Activated CD8-positive, alpha-beta T cell treated with anti-CD3 and anti-CD28 coated beads for 36 hours (primary cell): ENCODE measurements at regions of chr4 and their contacts with region 1.

Region 1: GRCh38 chr4:38759113-38759789 is 23.5 kb downstream of the TLR10 start:
- DNase-seq: peak; percentile 76
- ATAC-seq: peak; percentile 80
- H3K4me3 Mint-ChIP-seq: no peak overlapping the region
- H3K27ac Mint-ChIP-seq: no peak overlapping the region
- H3K4me1 Mint-ChIP-seq: peaks cover 16% of the 10 kb centered on the region
- H3K27me3 Mint-ChIP-seq: no peaks in the 10 kb centered on the region
- CTCF ChIP-seq: peak; percentile 84

Region 2: GRCh38 chr4:38774181-38774955 is 15.1 kb after region 1 on chr4:
- CTCF ChIA-PET with region 1: interaction called, 151 read pairs
- POLR2A ChIA-PET with region 1: no interaction called
- intact Hi-C with region 1: no loop called
- DNase-seq: no peak
- ATAC-seq: no peak
- H3K4me3 Mint-ChIP-seq: no peak overlapping the region
- H3K27ac Mint-ChIP-seq: no peak overlapping the region
- H3K4me1 Mint-ChIP-seq: no peaks in the 10 kb centered on the region
- H3K27me3 Mint-ChIP-seq: peaks cover 3% of the 10 kb centered on the region
- CTCF ChIP-seq: no peak

Region 3: DNA sequence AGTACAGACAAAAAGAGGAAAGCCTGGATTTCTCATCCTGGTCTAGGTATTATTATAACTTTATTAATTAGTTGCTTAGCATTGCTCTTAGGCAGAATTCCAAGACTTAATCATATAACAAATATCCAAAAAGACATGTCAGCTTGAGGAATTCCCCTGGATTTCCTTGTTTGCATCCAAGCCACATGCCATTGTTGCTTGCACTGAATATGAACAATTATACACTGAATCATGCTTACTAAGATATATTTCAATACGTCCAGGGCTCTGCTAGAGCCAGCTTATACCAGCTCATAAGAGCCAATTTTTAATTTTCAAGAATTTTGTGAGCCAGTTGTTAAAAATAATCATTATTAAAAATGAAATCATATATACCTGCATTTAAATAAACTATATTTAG is 29.1 kb after region 1 on chr4:
- CTCF ChIA-PET with region 1: interaction called, 151 read pairs
- POLR2A ChIA-PET with region 1: no interaction called
- intact Hi-C with region 1: no loop called
- DNase-seq: no peak
- ATAC-seq: no peak
- H3K4me3 Mint-ChIP-seq: no peak overlapping the region
- H3K27ac Mint-ChIP-seq: no peak overlapping the region
- H3K4me1 Mint-ChIP-seq: peaks cover 4% of the 10 kb centered on the region
- H3K27me3 Mint-ChIP-seq: no peaks in the 10 kb centered on the region
- CTCF ChIP-seq: no peak

Region 4: DNA sequence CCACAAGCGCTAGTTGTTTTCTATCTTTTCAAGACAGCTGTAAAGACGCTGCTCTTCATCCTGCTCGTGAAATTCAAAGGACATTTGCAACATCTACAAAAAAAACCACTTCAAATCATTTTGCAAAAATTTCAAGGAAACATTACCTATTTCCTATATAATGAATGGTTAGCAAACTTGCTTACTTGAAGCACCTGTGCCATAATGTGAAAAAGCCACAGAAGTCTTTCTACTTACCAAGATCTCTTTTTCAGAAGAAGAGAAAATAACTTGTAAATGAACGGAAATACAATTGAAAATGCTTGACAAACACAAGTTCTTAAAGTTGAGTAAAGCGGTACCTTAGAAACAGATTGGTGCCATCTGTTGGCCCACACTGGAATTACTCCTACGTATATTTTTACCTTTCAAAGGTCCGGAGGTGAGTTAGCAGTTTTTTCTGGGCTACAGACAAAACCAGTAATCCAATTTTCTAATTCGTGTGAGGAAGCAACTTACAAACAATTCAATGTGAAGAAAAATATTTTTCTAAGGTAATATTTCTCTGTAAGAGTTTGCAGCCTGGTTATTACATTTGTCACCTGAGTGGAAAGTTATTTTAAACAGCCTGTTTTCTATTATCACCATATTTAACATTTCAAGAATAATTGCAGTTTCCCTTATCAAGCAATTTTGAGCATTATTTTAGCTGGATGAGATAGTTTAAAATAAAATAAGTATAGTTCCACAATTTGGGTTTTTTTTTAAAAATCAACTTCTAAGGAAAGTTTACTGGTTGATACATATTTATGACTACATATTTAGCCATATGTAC is 97.5 kb after region 1 on chr4 and contains the start of gene TLR6:
- CTCF ChIA-PET with region 1: interaction called, 95 read pairs
- POLR2A ChIA-PET with region 1: interaction called, 5 read pairs
- intact Hi-C with region 1: loop called (anchors 2 kb)
- DNase-seq: peak; percentile 87
- ATAC-seq: peak; percentile 64
- H3K4me3 Mint-ChIP-seq: peak within 1 kb of the TSS; percentile 79
- H3K27ac Mint-ChIP-seq: peak within 1 kb of the TSS; percentile 80
- H3K4me1 Mint-ChIP-seq: peaks cover 28% of the 10 kb centered on the region
- H3K27me3 Mint-ChIP-seq: peaks cover 2% of the 10 kb centered on the region
- CTCF ChIP-seq: peak; percentile 87
- total RNA-seq, gene TLR6: 1.6 to 2.0 TPM

Region 5: DNA sequence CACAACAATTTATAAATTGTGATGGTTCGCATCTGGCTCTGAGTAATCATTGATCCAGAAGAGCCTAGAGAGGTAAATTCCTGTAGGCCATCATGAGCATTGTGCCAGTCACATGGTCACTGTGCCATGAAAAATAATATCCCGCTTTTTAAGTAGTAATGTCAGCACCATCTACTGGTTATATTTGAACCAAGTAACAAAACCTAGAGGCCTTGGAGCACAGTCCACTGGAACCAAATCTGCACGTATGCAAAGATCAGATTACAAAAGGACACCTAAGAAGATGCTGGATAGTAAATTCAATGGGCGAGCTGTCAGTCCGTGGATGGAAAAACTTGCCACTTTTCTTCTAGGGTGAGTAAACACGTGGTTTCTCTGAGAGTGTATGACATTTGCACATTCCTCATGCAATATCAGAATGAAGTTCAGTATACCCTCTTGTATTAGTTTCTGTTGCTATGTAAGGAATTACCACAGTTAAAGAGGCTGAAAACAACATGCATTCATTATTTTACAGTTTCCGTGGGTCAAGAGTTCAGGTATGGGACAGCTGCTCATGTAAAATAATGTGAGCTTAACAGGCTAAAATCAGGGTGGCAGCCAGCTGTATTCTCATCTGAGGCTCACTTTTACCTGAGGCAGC is 135.2 kb after region 1 on chr4:
- CTCF ChIA-PET with region 1: interaction called, 32 read pairs
- POLR2A ChIA-PET with region 1: interaction called, 4 read pairs
- intact Hi-C with region 1: no loop called
- DNase-seq: peak; percentile 27
- ATAC-seq: peak; percentile 48
- H3K4me3 Mint-ChIP-seq: no peak overlapping the region
- H3K27ac Mint-ChIP-seq: no peak overlapping the region
- H3K4me1 Mint-ChIP-seq: peaks cover 29% of the 10 kb centered on the region
- H3K27me3 Mint-ChIP-seq: peaks cover 5% of the 10 kb centered on the region
- CTCF ChIP-seq: no peak

Region 6: GRCh38 chr4:39134683-39135319 is 375.6 kb after region 1 on chr4:
- CTCF ChIA-PET with region 1: interaction called, 35 read pairs
- POLR2A ChIA-PET with region 1: no interaction called
- intact Hi-C with region 1: no loop called
- DNase-seq: no peak
- ATAC-seq: no peak
- H3K4me3 Mint-ChIP-seq: no peak overlapping the region
- H3K27ac Mint-ChIP-seq: no peak overlapping the region
- H3K4me1 Mint-ChIP-seq: peaks cover 9% of the 10 kb centered on the region
- H3K27me3 Mint-ChIP-seq: no peaks in the 10 kb centered on the region
- CTCF ChIP-seq: no peak